HepG2 (cell line): ENCODE measurements at regions of chr14 and their contacts with region 1.

Region 1: GRCh38 chr14:94322648-94323570 is at the start of gene SERPINA6:
- DNase-seq: peak; percentile 95
- ATAC-seq: peak; percentile 92
- H3K4me3 ChIP-seq: peak within 1 kb of the TSS; percentile 61 to 87 (median 67)
- H3K27ac ChIP-seq: peak within 1 kb of the TSS; percentile 87
- H3K4me1 ChIP-seq: peaks cover 72% of the 10 kb centered on the region
- H3K27me3 ChIP-seq: no peaks in the 10 kb centered on the region
- CTCF ChIP-seq: no peak
- EP300 ChIP-seq: peak in 1 of 2 experiments; percentile 60; a peak in 2 of 4 replicates
- POLR2A ChIP-seq: peak; percentile 84 to 99
- RAD21 ChIP-seq: peak; percentile 31; the same call in 1 of the 2 replicates
- total RNA-seq, gene SERPINA6: 144 and 260 TPM in 2 replicates

Region 2: GRCh38 chr14:94110552-94111181 is 212.2 kb before region 1 on chr14 and contains the start of gene IFI27:
- CTCF ChIA-PET with region 1: no interaction called
- POLR2A ChIA-PET with region 1: no interaction called
- in situ Hi-C with region 1: no loop called
- intact Hi-C with region 1: no loop called
- DNase-seq: no peak
- ATAC-seq: no peak; the same call in 2 of the 3 replicates
- H3K4me3 ChIP-seq: no peak within 1 kb of the TSS
- H3K27ac ChIP-seq: no peak within 1 kb of the TSS
- H3K4me1 ChIP-seq: peaks cover 53% of the 10 kb centered on the region
- H3K27me3 ChIP-seq: peaks cover 2 to 14% of the 10 kb centered on the region in 2 experiments; a peak in 2 of 5 replicates
- CTCF ChIP-seq: no peak
- EP300 ChIP-seq: no peak
- POLR2A ChIP-seq: no peak
- RAD21 ChIP-seq: no peak
- total RNA-seq, gene IFI27: 1.2 and 2.0 TPM in 2 replicates

Region 3: GRCh38 chr14:94278731-94279130 is 44.2 kb before region 1 on chr14:
- CTCF ChIA-PET with region 1: no interaction called
- POLR2A ChIA-PET with region 1: interaction called, 12 read pairs
- in situ Hi-C with region 1: no loop called
- intact Hi-C with region 1: no loop called
- DNase-seq: no peak
- ATAC-seq: no peak
- H3K4me3 ChIP-seq: no peak overlapping the region
- H3K27ac ChIP-seq: no peak overlapping the region
- H3K4me1 ChIP-seq: peaks cover 21% of the 10 kb centered on the region
- H3K27me3 ChIP-seq: no peaks in the 10 kb centered on the region; a peak in 1 of 5 replicates
- CTCF ChIP-seq: no peak
- EP300 ChIP-seq: no peak
- POLR2A ChIP-seq: no peak
- RAD21 ChIP-seq: no peak

Region 4: GRCh38 chr14:94342334-94342934 is 19.5 kb after region 1 on chr14:
- CTCF ChIA-PET with region 1: no interaction called
- POLR2A ChIA-PET with region 1: interaction called, 16 read pairs
- in situ Hi-C with region 1: no loop called
- intact Hi-C with region 1: loop called (anchors 2 kb)
- DNase-seq: peak; percentile 82
- ATAC-seq: peak; percentile 25; the same call in 2 of the 3 replicates
- H3K4me3 ChIP-seq: no peak overlapping the region
- H3K27ac ChIP-seq: no peak overlapping the region
- H3K4me1 ChIP-seq: peaks cover 96% of the 10 kb centered on the region
- H3K27me3 ChIP-seq: no peaks in the 10 kb centered on the region; a peak in 1 of 5 replicates
- CTCF ChIP-seq: no peak
- EP300 ChIP-seq: peak in 1 of 2 experiments; percentile 45; a peak in 1 of 4 replicates
- POLR2A ChIP-seq: no peak
- RAD21 ChIP-seq: no peak

Region 5: DNA sequence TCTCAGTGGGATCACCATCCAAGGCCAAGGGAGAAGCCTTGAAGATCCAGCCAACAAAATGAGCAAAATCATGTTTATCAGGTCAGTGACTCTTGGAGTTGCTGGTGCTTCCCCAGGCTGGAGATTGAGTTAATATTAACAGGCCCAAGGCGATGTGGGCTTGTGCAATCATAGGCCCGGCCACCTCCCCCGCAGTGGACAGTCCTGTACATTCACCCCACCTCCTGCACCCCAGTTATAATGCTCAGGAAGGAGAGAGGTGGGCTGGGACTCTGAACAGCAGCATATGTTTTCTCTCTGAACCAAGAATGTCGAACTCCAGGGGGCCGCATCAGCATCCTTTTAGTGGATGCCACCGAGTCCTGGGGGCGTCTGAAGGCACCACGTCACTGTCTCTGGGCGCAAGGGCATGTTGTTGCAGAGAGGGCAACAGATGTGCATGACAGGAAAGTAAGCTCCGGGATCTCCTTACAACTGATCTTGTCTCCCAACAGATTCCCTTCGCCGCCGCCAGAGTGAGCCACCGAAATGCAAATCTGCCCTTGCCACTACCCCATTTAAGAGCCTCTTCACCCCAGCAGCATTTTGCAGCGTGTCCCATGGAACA is 32.4 kb after region 1 on chr14:
- CTCF ChIA-PET with region 1: no interaction called
- POLR2A ChIA-PET with region 1: no interaction called
- in situ Hi-C with region 1: no loop called
- intact Hi-C with region 1: loop called (anchors 5 kb)
- DNase-seq: peak; percentile 85
- ATAC-seq: peak; percentile 95
- H3K4me3 ChIP-seq: peak overlapping the region; percentile 40 to 65 (median 44); a peak in 5 of 6 replicates
- H3K27ac ChIP-seq: peak overlapping the region; percentile 63
- H3K4me1 ChIP-seq: peaks cover 61% of the 10 kb centered on the region
- H3K27me3 ChIP-seq: no peaks in the 10 kb centered on the region
- CTCF ChIP-seq: peak; percentile 88
- EP300 ChIP-seq: peak in 1 of 2 experiments; percentile 54; a peak in 2 of 4 replicates
- POLR2A ChIP-seq: peak in 1 of 2 experiments; percentile 34; a peak in 1 of 4 replicates
- RAD21 ChIP-seq: peak; percentile 80

Region 6: GRCh38 chr14:94412671-94413638 is 90.0 kb after region 1 on chr14:
- CTCF ChIA-PET with region 1: no interaction called
- POLR2A ChIA-PET with region 1: interaction called, 3 read pairs
- in situ Hi-C with region 1: no loop called
- intact Hi-C with region 1: loop called (anchors 2 kb)
- DNase-seq: peak; percentile 70
- ATAC-seq: peak; percentile 90
- H3K4me3 ChIP-seq: peak overlapping the region in 1 of 3 experiments; percentile 9; a peak in 1 of 6 replicates
- H3K27ac ChIP-seq: peak overlapping the region; percentile 48
- H3K4me1 ChIP-seq: peaks cover 77% of the 10 kb centered on the region
- H3K27me3 ChIP-seq: no peaks in the 10 kb centered on the region
- CTCF ChIP-seq: peak; percentile 94
- EP300 ChIP-seq: no peak
- POLR2A ChIP-seq: no peak
- RAD21 ChIP-seq: peak; percentile 92